Activated T-helper 2 cell treated with anti-CD3 and anti-CD28 coated beads, Interferon-gamma antibody, Interleukin-2, Interleukin-4, amounts not matched to agents 10 μg/mL and 5 μg/mL and 100 μg/mL, durations not matched to agents 14 hours and 24 hours and 36 hours (primary cell): ENCODE measurements at regions of chr3 and their contacts with region 1.

Region 1: GRCh38 chr3:184469423-184469822 is 89.6 kb downstream of the CHRD start:
- DNase-seq: no peak
- H3K4me3 Mint-ChIP-seq: no peak overlapping the region
- H3K27ac Mint-ChIP-seq: no peak overlapping the region
- H3K4me1 Mint-ChIP-seq: peaks cover 25% of the 10 kb centered on the region
- H3K27me3 Mint-ChIP-seq: peaks cover 10% of the 10 kb centered on the region

Region 2: DNA sequence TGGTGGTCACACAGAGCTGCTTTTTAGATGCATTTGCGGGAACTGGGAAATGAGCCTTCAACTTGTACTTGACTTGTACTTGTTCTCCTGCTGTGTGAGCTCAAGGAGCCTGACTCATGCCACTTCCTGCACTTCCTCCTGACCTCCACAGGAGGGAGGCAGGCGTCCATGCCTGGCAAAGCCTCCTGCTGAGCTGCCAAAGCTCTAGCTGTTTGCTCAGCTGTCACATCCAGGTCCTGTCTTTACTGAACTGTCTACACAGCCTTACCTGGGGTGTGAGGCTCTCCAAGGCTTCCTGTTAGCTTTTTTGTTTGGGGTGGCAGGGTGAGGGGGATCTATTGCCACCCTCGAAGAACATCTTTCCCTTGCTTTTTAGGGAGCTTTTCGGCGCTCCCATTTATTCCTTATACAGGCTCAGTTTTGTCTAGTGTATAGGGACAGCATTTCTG is 97.8 kb before region 1 on chr3:
- intact Hi-C with region 1: loop called (anchors 5 kb)
- DNase-seq: peak; percentile 52
- H3K4me3 Mint-ChIP-seq: no peak overlapping the region
- H3K27ac Mint-ChIP-seq: no peak overlapping the region
- H3K4me1 Mint-ChIP-seq: peaks cover 12% of the 10 kb centered on the region
- H3K27me3 Mint-ChIP-seq: peaks cover 19% of the 10 kb centered on the region

Region 3: DNA sequence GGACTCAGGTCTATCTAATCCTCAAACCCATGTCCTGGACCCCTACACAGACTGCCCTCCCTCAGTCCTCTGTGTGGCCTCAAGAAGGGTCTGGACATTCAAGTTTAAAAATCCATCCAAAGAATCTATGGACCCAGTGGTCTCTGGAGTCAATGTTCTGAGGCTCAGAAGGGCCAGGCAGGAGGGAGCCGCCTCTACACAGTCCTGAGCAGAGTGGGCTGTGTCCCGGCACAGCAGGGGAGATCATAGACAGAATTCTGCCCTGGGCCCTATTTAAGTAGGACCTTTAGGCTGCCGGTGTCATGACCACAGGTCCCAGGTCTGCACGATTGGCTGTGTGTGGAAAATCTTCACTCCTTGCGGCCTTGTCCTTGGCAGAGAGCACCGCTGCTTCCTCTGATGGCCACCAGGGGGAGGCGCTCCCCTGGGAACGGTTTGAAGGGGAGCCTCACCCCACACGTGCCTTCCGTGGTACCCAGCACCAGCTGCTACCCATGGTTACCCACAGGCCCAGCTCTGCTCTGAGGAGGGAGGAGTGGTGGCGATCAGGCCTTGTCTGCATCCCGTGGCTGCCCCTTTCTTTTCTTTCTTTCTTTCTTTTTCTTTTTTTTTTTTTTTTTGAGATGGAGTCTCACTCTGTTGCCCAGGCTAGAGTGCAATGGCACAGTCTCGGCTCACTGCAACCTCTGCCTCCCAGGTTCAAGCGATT is 51.6 kb before region 1 on chr3:
- intact Hi-C with region 1: loop called (anchors 2 kb)
- DNase-seq: peak; percentile 53
- H3K4me3 Mint-ChIP-seq: no peak overlapping the region
- H3K27ac Mint-ChIP-seq: no peak overlapping the region
- H3K4me1 Mint-ChIP-seq: no peaks in the 10 kb centered on the region
- H3K27me3 Mint-ChIP-seq: peaks cover 6% of the 10 kb centered on the region